Tibial artery (tissue), 4 donors: ENCODE measurements at regions of chr3 and their contacts with region 1.

Region 1: DNA sequence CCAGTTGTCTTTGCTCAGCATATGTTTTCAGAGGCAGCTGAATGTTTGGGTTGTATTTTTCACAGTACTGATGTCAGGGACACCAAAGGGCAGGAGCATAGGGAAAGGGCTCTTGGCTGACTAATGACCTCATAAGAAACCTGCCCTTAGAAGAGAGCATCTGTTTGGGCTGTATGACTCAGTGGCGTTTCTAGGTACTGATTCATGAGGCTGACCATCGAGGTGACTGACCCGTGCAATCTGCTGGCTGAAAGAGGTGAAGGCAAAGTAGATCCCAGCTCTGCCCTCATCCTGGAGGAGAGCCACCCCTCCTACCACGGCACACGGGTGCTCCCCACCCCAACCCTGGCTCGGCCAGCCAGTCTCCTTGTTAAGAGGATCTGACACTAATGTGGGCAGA is 8.3 kb downstream of the LMCD1 start:
- DNase-seq: no peak
- H3K4me3 ChIP-seq: no peak overlapping the region
- H3K27ac ChIP-seq: peak overlapping the region; percentile 81 to 86
- H3K4me1 ChIP-seq: peaks cover 0 to 89% (median 55%) of the 10 kb centered on the region in 4 donors
- H3K27me3 ChIP-seq: no peaks in the 10 kb centered on the region
- CTCF ChIP-seq: no peak

Region 2: DNA sequence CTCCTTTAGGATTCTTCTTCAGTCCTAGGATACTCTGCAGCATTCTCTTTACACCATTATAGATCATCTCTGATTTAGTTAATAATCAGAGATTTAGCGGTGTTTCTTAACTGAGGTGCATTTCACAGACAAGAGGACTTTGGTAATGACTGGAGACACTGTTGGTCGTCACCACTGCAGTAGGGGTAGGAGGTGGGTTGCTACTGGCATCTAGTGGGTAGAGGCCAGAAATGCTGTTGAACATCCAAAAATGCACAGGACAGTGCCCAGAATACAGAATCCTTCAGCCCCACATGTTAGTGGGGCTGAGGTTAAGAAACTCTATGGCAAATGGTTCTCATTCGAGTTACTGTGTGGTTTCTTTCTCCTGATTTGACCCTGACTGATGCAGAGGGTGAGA is 88.7 kb before region 1 on chr3:
- intact Hi-C with region 1: no loop called
- DNase-seq: no peak
- H3K4me3 ChIP-seq: no peak overlapping the region
- H3K27ac ChIP-seq: no peak overlapping the region
- H3K4me1 ChIP-seq: no peaks in the 10 kb centered on the region
- H3K27me3 ChIP-seq: no peaks in the 10 kb centered on the region
- CTCF ChIP-seq: no peak

Region 3: GRCh38 chr3:8548502-8549275 is 38.7 kb after region 1 on chr3:
- intact Hi-C with region 1: loop called (anchors 5 kb)
- DNase-seq: no peak
- H3K4me3 ChIP-seq: no peak overlapping the region
- H3K27ac ChIP-seq: peak overlapping the region; percentile 76 to 81
- H3K4me1 ChIP-seq: peaks cover 3 to 47% (median 41%) of the 10 kb centered on the region in 4 donors
- H3K27me3 ChIP-seq: no peaks in the 10 kb centered on the region
- CTCF ChIP-seq: no peak